RWPE1 (cell line): ENCODE measurements at regions of chr11 and their contacts with region 1.

Region 1: DNA sequence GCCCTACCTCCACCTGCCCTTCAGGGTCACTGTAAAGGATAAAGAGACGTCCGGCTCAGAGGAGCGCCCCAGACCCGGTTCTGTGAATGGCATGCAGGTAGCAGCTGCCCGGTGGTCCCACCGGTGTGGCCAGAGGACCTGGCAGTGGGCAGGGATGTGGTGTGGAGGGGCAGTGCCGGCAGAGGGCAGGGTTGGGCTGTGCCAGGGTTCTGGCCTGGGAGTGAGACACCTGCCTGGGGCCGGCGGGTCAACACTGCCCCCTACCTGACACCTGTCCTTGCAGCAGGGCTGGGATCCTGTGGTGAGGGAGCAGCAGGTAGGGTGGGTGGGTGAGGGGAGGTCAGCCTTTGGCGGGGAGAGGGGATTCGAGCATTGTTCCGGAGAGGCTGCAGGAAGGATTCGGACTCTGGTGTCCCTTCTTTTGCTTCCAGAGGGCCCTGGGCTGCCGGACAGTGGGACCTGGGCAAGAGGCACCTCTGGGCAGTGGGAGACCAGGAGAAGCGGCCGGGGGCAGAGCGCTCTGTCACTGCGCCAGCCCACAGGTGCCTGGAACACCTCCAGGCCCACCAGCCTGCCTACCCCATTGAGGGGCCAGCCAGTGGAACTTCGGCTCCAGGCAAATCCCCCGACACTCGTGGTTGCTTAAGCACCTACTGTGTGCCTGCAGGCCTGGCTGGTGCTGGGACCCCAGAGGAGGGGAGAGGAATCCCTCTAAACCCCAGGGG is 1.6 kb upstream of the PHLDA2 start:
- DNase-seq: peak; percentile 85
- H3K27ac ChIP-seq: peak overlapping the region; percentile 95
- CTCF ChIP-seq: peak; percentile 94

Region 2: DNA sequence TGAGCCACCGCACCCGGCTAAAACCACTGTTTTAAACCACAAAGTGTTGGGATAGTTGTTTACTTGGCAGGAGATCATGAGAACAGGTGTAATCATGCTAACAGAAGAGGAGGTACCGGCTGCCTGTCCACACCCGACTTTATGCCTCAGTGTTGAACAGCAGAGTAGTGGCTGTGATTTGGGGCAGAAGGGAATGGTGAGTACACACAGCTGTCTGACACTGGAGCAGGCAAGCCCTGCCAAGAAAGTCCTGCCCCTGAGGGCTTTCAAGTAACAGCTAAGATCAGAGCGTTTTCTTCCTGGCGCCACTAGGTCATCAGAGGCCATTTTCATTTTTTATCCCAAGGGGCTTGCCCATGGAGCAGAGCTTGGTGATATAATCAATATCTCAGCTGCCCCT is 53.4 kb before region 1 on chr11:
- CTCF ChIA-PET with region 1: no interaction called
- POLR2A ChIA-PET with region 1: no interaction called
- DNase-seq: no peak
- H3K27ac ChIP-seq: no peak overlapping the region
- CTCF ChIP-seq: no peak

Region 3: DNA sequence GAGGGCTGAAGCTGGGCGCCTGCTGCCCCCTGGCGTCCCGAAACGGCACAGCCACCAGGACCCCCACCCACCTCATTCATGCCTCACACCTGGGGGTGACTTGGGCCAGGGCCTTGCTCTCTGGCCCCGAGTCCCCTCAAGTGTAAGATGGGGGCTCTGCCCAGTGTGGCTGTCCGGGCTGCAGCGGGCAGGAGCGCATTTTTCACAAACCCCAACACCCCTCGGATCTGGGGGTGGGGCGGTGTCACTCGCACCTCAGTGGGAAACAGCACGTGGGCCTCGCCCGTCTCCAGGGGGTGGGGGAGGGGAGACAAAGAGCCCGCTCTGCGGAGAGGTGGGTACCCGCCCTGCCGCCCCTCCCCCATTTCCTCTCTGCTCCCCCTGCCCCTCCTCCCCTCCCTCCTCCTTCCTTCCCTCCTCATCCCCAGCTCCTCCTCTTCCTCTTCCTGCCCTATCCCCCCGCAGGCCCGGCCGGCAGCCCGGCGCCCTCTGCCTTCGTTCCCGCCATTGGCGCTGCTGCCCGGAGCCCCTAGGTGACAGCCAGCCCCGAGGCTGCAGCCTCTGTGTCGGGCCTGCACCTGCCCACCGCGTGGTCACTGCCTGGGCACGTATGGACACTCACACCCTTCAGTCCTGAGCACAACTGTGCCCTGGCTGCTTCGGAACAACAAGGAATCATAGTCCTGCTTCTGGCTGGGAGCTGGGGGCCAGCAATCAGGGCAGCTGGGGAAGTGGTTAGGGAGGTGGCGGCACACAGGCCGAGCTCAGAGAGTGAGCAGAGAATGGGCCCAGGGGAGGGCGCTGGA is 38.4 kb before region 1 on chr11:
- CTCF ChIA-PET with region 1: interaction called, 19 read pairs
- POLR2A ChIA-PET with region 1: interaction called, 18 read pairs
- DNase-seq: no peak
- H3K27ac ChIP-seq: peak overlapping the region; percentile 94
- CTCF ChIP-seq: peak; percentile 87

Region 4: GRCh38 chr11:2912498-2912897 is 18.4 kb before region 1 on chr11:
- CTCF ChIA-PET with region 1: no interaction called
- POLR2A ChIA-PET with region 1: interaction called, 10 read pairs
- DNase-seq: peak; percentile 99
- H3K27ac ChIP-seq: peak overlapping the region; percentile 96
- CTCF ChIP-seq: no peak